PC-3 (cell line): ENCODE measurements at regions of chr9 and their contacts with region 1.

Region 1: DNA sequence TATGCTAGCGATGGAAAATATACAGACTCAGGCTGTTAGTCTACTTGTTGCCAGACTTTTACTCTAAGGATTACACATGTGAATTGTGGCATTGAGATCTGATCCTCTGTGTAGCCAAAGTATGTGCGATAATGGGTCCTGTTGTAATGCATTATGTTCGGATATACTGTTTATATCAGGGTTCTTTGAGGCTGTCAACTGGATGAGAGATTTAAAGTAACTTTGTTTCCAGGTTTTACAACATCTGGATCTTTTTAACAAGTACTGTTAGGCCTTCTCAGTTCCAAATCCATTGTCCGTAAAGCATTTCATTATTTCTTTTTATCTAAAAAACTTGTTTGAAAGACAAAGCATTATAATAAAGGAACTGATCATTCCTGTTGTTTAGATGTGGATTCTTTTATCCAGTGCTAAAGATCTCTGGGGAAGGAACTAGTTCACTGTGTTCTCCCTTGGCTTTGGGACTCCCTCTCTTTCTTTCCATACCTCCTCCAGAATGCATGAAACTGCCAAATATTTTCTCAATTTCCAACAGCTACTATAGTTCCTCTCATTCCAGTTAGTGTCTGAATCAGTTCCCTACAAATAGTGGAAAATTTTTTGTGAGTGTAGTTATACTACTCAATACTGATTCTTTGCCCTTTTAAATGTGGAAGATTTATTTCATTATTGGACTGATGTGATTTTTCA is 68.8 kb downstream of the HACD4 start:
- DNase-seq: no peak
- ATAC-seq: no peak
- H3K4me3 ChIP-seq: no peak overlapping the region
- H3K27ac ChIP-seq: no peak overlapping the region
- H3K4me1 ChIP-seq: no peaks in the 10 kb centered on the region
- H3K27me3 ChIP-seq: no peaks in the 10 kb centered on the region
- CTCF ChIP-seq: no peak

Region 2: DNA sequence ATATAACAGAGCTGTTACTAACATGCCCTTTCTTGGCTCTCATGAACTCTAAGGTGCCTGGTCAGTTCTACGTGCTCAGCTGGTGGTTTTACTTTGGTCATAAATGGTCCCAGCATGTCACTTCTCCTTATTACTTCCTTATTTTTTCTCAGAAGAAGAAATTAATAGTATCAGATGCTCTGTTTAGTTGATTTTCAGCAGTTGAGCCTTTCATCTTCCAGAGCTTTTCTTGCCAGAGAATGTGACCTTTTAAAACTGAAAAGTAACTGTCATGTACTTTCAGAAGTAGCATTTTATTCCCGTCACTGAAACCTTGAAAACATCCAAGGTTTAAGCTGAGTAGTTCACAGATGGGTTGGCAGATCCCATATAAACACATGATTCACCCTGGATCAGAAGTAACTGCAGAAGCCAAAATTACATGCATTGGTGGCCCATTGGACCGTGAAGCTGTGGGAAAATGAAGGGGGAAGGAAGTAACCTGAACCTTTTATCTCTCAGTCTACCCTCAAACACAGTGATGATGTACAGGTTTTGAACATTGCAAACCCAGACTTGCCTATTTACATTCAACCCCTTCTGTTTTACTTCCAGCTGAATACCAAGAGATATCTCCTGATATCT is 18.3 kb after region 1 on chr9:
- CTCF ChIA-PET with region 1: no interaction called
- POLR2A ChIA-PET with region 1: no interaction called
- intact Hi-C with region 1: loop called (anchors 2 kb)
- DNase-seq: peak; percentile 62
- ATAC-seq: peak; percentile 72
- H3K4me3 ChIP-seq: no peak overlapping the region
- H3K27ac ChIP-seq: peak overlapping the region; percentile 66
- H3K4me1 ChIP-seq: peaks cover 34% of the 10 kb centered on the region
- H3K27me3 ChIP-seq: no peaks in the 10 kb centered on the region
- CTCF ChIP-seq: no peak